ENCODE measurements at regions of chr12 and their contacts with region 1.

Region 1: GRCh38 chr12:68807576-68808387 is at the start of gene MDM2:
- DNase-seq: peak; percentile 98
- H3K4me3 Mint-ChIP-seq: peak within 1 kb of the TSS; percentile 93
- H3K27ac Mint-ChIP-seq: peak within 1 kb of the TSS; percentile 99
- H3K4me1 Mint-ChIP-seq: peaks cover 20% of the 10 kb centered on the region
- H3K27me3 Mint-ChIP-seq: no peaks in the 10 kb centered on the region
- total RNA-seq, gene MDM2: 180 and 194 TPM in 2 replicates

Region 2: DNA sequence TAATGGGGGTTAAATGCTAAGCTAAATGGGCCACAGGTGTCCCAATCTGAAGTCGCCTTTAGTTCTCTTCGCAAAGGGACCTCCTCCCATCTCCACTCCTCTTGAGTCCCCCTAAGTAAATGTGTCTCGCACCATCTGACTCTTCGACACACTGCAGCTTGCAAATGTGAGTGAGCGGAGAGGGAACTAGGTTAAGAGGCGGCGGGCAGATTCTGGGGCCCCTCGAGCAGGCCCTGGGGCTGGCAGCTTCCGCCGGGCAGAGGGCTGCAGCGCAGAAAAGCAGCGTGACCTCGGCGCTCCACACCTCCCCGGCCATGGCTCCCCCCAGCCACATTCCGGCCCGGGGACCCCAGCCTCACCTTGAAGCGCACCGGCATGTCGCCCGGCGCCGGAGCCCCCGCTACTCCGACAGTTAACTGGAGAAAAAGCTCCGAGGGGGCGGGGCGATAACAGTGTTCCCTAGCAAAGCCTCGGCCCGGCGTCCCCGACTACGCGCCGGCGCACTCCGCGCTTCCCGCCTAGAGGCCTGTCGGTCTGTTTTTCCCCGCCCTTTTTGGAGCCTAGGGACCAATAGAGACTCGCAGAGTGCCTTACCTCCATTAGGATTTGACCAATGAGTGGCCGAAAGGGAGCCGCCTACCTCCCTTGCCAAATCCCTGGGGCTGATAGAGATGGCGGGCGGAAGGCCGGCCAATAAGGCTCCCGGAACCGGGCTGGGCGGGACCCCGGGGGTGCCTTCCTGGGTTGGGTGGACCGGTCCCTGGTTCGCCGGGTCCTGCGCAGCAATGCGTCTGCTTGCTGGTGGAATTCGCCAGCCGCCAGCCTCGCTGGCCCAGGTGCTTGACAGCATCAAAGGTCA is 475.7 kb before region 1 on chr12 and contains the start of gene MDM1:
- intact Hi-C with region 1: loop called (anchors 10 kb)
- DNase-seq: peak; percentile 95
- H3K4me3 Mint-ChIP-seq: peak within 1 kb of the TSS; percentile 87
- H3K27ac Mint-ChIP-seq: peak within 1 kb of the TSS; percentile 36
- H3K4me1 Mint-ChIP-seq: peaks cover 29% of the 10 kb centered on the region
- H3K27me3 Mint-ChIP-seq: peaks cover 7% of the 10 kb centered on the region
- total RNA-seq, gene MDM1: 13.1 and 14.8 TPM in 2 replicates

Region 3: GRCh38 chr12:68686595-68687521 is 120.9 kb before region 1 on chr12 and contains the start of gene NUP107:
- intact Hi-C with region 1: loop called (anchors 5 kb)
- DNase-seq: peak; percentile 94
- H3K4me3 Mint-ChIP-seq: peak within 1 kb of the TSS; percentile 93
- H3K27ac Mint-ChIP-seq: peak within 1 kb of the TSS; percentile 93
- H3K4me1 Mint-ChIP-seq: peaks cover 31% of the 10 kb centered on the region
- H3K27me3 Mint-ChIP-seq: no peaks in the 10 kb centered on the region
- total RNA-seq, gene NUP107: 101 and 106 TPM in 2 replicates

Region 4: GRCh38 chr12:68825569-68826217 is 17.9 kb after region 1 on chr12:
- intact Hi-C with region 1: loop called (anchors 2 kb)
- DNase-seq: no peak
- H3K4me3 Mint-ChIP-seq: no peak overlapping the region
- H3K27ac Mint-ChIP-seq: peak overlapping the region; percentile 44
- H3K4me1 Mint-ChIP-seq: peaks cover 23% of the 10 kb centered on the region
- H3K27me3 Mint-ChIP-seq: no peaks in the 10 kb centered on the region

Region 5: DNA sequence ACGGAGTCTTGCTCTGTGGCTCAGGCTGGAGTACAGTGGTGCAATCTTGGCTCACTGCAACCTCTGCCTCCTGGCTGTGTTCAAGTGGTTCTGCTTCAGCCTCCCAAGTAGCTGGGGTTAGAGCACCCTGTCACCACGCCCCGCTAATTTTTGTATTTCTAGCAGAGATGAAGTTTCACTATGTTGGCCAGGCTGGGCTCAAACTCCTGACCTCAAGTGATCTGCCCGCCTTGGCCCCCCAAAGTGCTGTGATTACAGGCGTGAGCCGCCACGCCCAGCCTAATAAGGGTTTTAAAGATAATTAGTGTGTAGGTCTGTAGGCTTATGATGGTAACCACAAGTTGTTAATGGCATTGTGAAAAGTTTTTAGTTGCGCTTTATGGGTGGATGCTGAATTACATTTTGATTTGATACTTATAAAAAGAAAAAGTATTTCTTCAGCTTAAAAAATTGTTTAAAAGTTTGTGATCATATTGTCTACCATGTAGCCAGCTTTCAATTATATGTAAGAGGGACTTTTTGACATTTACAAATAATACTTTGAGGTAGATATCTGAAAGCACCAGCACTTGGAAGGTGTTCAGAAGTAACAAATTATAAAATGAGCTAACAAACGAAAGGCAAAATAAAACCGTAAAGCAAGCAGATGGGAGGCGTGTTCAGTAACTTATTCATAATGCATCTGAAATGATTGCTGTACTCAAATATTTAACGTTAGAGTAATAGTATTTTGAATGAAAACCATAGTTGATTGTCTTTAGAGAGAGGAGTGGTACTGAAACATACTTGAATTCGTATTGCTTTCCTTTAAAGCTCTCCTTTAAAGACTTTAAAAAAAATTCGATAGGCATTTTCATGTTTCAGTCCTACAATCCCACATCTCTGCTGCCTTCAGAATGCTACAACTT is 37.3 kb after region 1 on chr12:
- intact Hi-C with region 1: no loop called
- DNase-seq: no peak
- H3K4me3 Mint-ChIP-seq: no peak overlapping the region
- H3K27ac Mint-ChIP-seq: no peak overlapping the region
- H3K4me1 Mint-ChIP-seq: peaks cover 8% of the 10 kb centered on the region
- H3K27me3 Mint-ChIP-seq: no peaks in the 10 kb centered on the region

Region 6: GRCh38 chr12:69211160-69211559 is 403.4 kb after region 1 on chr12:
- intact Hi-C with region 1: no loop called
- DNase-seq: no peak
- H3K4me3 Mint-ChIP-seq: no peak overlapping the region
- H3K27ac Mint-ChIP-seq: no peak overlapping the region
- H3K4me1 Mint-ChIP-seq: no peaks in the 10 kb centered on the region
- H3K27me3 Mint-ChIP-seq: no peaks in the 10 kb centered on the region

Region 7: DNA sequence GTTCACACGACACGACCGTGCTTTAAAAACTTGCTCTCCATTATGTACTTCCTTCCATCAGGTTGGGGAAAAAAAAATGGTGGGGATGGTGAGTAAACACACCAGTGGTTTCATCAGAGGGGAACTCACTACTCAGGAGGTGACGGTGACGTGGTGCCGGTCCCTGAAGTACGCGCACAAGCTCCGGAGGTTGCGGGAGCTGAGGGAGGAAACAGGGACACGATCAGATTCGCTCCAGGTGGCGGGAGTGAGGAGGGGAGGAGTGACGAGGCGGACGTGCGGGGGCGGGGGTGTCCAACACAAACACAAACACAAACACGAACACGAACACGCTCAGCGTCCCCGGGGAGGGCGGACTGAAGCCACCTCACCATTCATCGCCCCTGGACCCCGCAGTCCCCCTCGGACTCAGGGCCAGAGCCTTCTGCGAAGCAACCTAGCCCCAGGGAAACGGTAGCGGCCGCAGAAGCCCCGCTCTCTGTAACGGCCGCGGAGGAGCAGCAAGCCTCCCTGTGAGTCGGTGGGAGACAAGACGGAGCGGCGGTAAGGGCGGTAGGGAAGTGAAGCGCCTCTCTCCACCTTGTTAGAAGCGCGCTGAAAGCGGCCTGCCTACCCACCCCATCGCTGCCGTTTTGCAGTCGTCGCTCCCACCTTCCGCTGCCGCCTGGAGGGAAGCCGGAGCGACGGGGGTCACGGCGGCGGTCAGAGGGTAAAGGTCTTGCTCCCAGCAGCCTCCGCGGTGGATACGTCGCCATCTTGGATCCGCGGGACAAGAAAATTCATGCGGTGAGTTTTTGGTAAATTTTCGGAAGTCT is 1435.1 kb after region 1 on chr12 and contains the start of gene CNOT2:
- intact Hi-C with region 1: loop called (anchors 5 kb)
- DNase-seq: peak; percentile 85
- H3K4me3 Mint-ChIP-seq: peak within 1 kb of the TSS; percentile 97
- H3K27ac Mint-ChIP-seq: peak within 1 kb of the TSS; percentile 99
- H3K4me1 Mint-ChIP-seq: peaks cover 45% of the 10 kb centered on the region
- H3K27me3 Mint-ChIP-seq: no peaks in the 10 kb centered on the region
- total RNA-seq, gene CNOT2: 67.1 and 69.1 TPM in 2 replicates